Calu3 (cell line): ENCODE measurements at regions of chr13 and their contacts with region 1.

Region 1: GRCh38 chr13:89169951-89170350 is 1498.8 kb downstream of the SLITRK5 start:
- DNase-seq: no peak
- H3K4me3 Mint-ChIP-seq: no peak overlapping the region
- H3K27ac Mint-ChIP-seq: no peak overlapping the region
- H3K4me1 Mint-ChIP-seq: no peaks in the 10 kb centered on the region
- H3K27me3 Mint-ChIP-seq: no peaks in the 10 kb centered on the region
- CTCF ChIP-seq: no peak

Region 2: DNA sequence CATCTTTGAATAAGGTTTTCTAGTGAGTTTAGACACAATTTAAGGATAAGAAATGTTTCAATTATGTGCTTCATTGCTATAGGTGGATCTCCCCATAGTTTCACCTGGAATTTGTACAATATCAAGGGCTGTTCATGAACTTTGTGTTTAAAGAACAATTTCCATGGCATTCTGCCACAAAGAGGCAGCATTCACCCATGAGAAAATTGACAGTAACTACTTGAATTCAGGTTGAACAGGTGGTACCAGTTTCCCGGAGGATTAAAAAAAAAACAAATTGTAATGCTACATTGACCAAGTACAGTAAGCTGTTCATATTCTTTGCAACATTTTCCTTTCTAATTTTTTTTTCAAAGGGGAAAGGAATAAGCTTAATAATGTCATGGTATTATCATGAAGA is 1489.7 kb before region 1 on chr13:
- CTCF ChIA-PET with region 1: no interaction called
- intact Hi-C with region 1: loop called (anchors 10 kb)
- DNase-seq: peak; percentile 2
- H3K4me3 Mint-ChIP-seq: no peak overlapping the region
- H3K27ac Mint-ChIP-seq: no peak overlapping the region
- H3K4me1 Mint-ChIP-seq: no peaks in the 10 kb centered on the region
- H3K27me3 Mint-ChIP-seq: no peaks in the 10 kb centered on the region
- CTCF ChIP-seq: no peak